Endothelial cell of umbilical vein (primary cell): ENCODE measurements at regions of chr9 and their contacts with region 1.

Region 1: GRCh38 chr9:6681147-6681956 is 35.8 kb upstream of the GLDC start:
- DNase-seq: peak; percentile 99
- H3K4me3 ChIP-seq: peak overlapping the region; percentile 68 to 85 (median 81)
- H3K27ac ChIP-seq: peak overlapping the region; percentile 84
- H3K4me1 ChIP-seq: peaks cover 5% of the 10 kb centered on the region
- H3K27me3 ChIP-seq: no peaks in the 10 kb centered on the region
- CTCF ChIP-seq: no peak
- POLR2A ChIP-seq: peak; percentile 93

Region 2: DNA sequence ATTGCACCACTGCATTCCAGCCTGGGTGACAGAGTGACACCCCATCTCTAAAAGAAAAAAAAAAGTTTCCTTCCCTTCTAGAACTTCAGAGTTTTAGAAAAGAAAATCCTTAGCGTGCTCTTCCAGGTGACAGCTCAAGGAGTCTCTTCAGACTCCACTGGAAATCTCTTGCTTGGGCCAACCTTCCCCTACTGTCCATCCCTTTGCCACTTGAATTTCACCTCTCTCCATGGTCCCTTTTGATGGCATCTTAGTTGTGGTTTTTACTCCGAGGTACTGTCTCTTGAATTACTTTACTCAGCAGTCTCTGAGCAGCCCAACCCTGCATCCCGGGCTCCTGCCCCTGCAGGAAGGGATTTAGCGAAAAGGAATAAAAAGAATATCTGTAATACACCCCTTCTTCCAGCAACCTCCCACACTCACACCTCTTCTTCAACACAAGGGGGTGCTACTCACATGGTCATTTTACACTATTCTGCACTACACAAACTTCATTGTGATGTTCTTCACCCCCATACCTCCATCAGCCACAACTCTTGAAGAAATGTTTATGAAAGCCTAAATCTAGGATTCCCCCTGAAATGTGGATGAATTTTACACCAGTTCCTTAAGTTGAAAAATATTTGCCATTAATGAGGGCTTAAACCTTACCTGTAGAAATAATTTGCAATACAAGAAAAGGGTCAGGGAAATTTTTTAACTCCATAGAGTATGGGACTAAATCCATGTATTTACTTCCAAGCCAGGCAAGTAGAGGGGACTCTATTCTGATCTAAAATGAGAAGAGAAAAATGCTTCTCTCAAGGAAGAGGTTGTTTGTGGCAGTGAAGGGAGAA is 327.3 kb before region 1 on chr9:
- CTCF ChIA-PET with region 1: no interaction called
- POLR2A ChIA-PET with region 1: no interaction called
- dilution Hi-C with region 1: no loop called
- intact Hi-C with region 1: loop called (anchors 1 kb)
- DNase-seq: peak; percentile 72
- H3K4me3 ChIP-seq: no peak overlapping the region
- H3K27ac ChIP-seq: no peak overlapping the region
- H3K4me1 ChIP-seq: peaks cover 4% of the 10 kb centered on the region
- H3K27me3 ChIP-seq: no peaks in the 10 kb centered on the region
- CTCF ChIP-seq: peak; percentile 67 to 69
- POLR2A ChIP-seq: no peak

Region 3: DNA sequence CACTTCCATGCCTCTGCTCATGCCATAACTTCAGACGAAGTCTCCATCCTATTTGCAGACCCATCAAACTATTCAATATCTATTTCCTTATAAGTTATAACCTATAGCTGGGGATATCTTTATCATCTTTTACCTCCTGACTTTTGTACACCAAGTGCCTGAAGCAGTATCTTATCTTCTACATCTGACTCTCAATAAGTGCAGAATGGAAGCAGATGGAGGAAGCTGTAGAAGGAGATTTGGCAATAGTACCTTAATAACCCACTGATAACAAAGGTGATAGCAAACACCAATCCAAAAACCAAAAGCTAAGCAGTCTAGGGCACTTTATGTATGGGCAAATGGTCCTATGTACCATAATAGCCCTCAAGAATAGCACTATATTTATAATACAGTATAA is 46.3 kb before region 1 on chr9:
- CTCF ChIA-PET with region 1: no interaction called
- POLR2A ChIA-PET with region 1: no interaction called
- dilution Hi-C with region 1: no loop called
- intact Hi-C with region 1: no loop called
- DNase-seq: no peak
- H3K4me3 ChIP-seq: no peak overlapping the region
- H3K27ac ChIP-seq: no peak overlapping the region
- H3K4me1 ChIP-seq: no peaks in the 10 kb centered on the region
- H3K27me3 ChIP-seq: no peaks in the 10 kb centered on the region
- CTCF ChIP-seq: no peak
- POLR2A ChIP-seq: no peak

Region 4: GRCh38 chr9:6645355-6646292 is 35.7 kb before region 1 on chr9 and contains the start of gene GLDC:
- CTCF ChIA-PET with region 1: no interaction called
- POLR2A ChIA-PET with region 1: no interaction called
- dilution Hi-C with region 1: no loop called
- intact Hi-C with region 1: loop called (anchors 5 kb)
- DNase-seq: peak; percentile 31
- H3K4me3 ChIP-seq: peak within 1 kb of the TSS; percentile 44 to 78 (median 71)
- H3K27ac ChIP-seq: no peak within 1 kb of the TSS
- H3K4me1 ChIP-seq: peaks cover 3% of the 10 kb centered on the region
- H3K27me3 ChIP-seq: peaks cover 37 to 46% of the 10 kb centered on the region in 2 experiments
- CTCF ChIP-seq: no peak
- POLR2A ChIP-seq: no peak
- total RNA-seq, gene GLDC: 2.6 and 4.7 TPM in 2 replicates

Region 5: GRCh38 chr9:6711403-6711802 is 30.1 kb after region 1 on chr9:
- CTCF ChIA-PET with region 1: no interaction called
- POLR2A ChIA-PET with region 1: no interaction called
- dilution Hi-C with region 1: no loop called
- intact Hi-C with region 1: no loop called
- DNase-seq: no peak
- H3K4me3 ChIP-seq: no peak overlapping the region
- H3K27ac ChIP-seq: no peak overlapping the region
- H3K4me1 ChIP-seq: no peaks in the 10 kb centered on the region
- H3K27me3 ChIP-seq: no peaks in the 10 kb centered on the region
- CTCF ChIP-seq: no peak
- POLR2A ChIP-seq: no peak

Region 6: DNA sequence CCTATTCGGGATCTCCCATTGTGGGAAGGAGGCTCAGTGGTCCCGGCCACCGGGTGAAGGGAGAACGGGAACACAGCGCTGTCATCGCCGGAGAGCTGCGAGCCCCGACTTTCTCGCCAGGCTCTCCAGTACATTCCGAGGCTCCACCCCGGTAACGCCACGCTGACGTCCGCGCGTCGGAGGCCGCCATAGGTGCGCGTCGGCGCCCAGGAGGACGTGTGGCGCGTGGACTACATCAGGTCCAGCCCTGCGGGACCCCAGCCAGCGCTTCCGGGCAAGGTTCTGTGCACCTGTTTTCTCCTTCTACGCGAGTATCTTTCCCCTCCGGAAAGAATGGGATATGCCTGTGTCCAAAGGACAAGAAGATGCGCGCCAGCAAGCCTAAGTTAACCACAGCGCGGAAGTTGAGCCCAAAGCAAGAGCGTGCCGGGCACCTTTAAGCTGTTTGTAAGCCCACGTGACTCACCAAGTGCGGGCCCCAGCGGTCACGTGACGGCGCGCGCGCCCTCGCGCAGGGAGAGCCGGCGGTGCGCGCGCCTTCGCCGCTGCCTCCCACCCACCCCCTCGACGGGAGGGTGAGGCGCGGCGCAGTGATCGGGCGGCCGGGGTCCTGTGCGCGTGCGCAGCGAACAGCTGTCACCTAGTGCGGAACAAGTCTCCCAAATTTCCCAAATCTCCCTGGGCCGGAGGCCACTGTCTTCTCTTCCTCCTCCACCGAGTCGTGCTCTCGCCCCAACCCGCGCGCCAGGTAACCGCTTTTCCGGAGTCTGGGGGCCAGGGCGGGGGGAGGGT is 76.3 kb after region 1 on chr9 and contains the start of gene KDM4C:
- CTCF ChIA-PET with region 1: no interaction called
- POLR2A ChIA-PET with region 1: interaction called, 4 read pairs
- dilution Hi-C with region 1: no loop called
- intact Hi-C with region 1: loop called (anchors 1 kb)
- DNase-seq: peak; percentile 97
- H3K4me3 ChIP-seq: peak within 1 kb of the TSS; percentile 84 to 92 (median 87)
- H3K27ac ChIP-seq: peak within 1 kb of the TSS; percentile 93
- H3K4me1 ChIP-seq: peaks cover 10% of the 10 kb centered on the region
- H3K27me3 ChIP-seq: peaks cover 0 to 2% of the 10 kb centered on the region in 2 experiments
- CTCF ChIP-seq: no peak
- POLR2A ChIP-seq: peak; percentile 92
- total RNA-seq, gene KDM4C: 15.0 and 17.5 TPM in 2 replicates

Region 7: GRCh38 chr9:6873857-6874256 is 192.5 kb after region 1 on chr9:
- CTCF ChIA-PET with region 1: no interaction called
- POLR2A ChIA-PET with region 1: no interaction called
- dilution Hi-C with region 1: no loop called
- intact Hi-C with region 1: no loop called
- DNase-seq: peak; percentile 79
- H3K4me3 ChIP-seq: peak overlapping the region in 1 of 3 experiments; percentile 38
- H3K27ac ChIP-seq: no peak overlapping the region
- H3K4me1 ChIP-seq: peaks cover 4% of the 10 kb centered on the region
- H3K27me3 ChIP-seq: no peaks in the 10 kb centered on the region
- CTCF ChIP-seq: no peak
- POLR2A ChIP-seq: no peak